Naive thymus-derived CD4-positive, alpha-beta T cell (primary cell): ENCODE measurements at regions of chr5 and their contacts with region 1.

Region 1: GRCh38 chr5:181191529-181192394 is 13.2 kb downstream of the TRIM7 start:
- DNase-seq: peak; percentile 91 to 99 (median 97)
- ATAC-seq: peak; percentile 81
- H3K4me3 ChIP-seq: peak overlapping the region; percentile 99
- H3K4me3 Mint-ChIP-seq: peak overlapping the region; percentile 94 to 99 (median 97)
- H3K27ac ChIP-seq: peak overlapping the region; percentile 86
- H3K27ac Mint-ChIP-seq: peak overlapping the region; percentile 95 to 100 (median 99)
- H3K4me1 ChIP-seq: peaks cover 0 to 5% of the 10 kb centered on the region in 2 donors
- H3K4me1 Mint-ChIP-seq: peaks cover 16 to 47% (median 26%) of the 10 kb centered on the region in 7 donors
- H3K27me3 ChIP-seq: no peaks in the 10 kb centered on the region
- H3K27me3 Mint-ChIP-seq: peaks cover 0 to 24% (median 0%) of the 10 kb centered on the region in 5 donors

Region 2: DNA sequence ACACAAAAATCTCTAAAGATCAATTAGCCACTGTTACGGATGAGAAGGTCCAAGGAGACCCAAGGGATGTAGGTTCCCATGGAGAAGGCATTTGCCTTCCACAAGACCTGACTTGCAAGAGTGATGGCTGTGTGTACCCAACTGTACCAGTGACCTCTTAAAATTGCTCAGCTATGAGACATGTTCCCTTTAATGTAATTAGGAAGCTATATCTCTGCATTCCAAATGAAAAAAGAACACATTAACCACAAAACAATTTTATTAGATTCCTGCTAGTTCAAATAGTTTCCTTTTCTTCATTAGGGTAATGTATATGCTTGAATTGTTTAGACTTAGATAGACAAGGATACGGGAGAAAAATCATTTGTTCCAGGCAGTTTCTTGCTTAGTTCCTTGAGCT is 455.2 kb before region 1 on chr5:
- CTCF ChIA-PET with region 1: no interaction called
- POLR2A ChIA-PET with region 1: no interaction called
- intact Hi-C with region 1: no loop called
- DNase-seq: no peak
- ATAC-seq: no peak
- H3K4me3 ChIP-seq: no peak overlapping the region
- H3K4me3 Mint-ChIP-seq: no peak overlapping the region
- H3K27ac ChIP-seq: no peak overlapping the region
- H3K27ac Mint-ChIP-seq: no peak overlapping the region
- H3K4me1 ChIP-seq: no peaks in the 10 kb centered on the region
- H3K4me1 Mint-ChIP-seq: peaks cover 0 to 5% (median 0%) of the 10 kb centered on the region in 7 donors
- H3K27me3 ChIP-seq: no peaks in the 10 kb centered on the region
- H3K27me3 Mint-ChIP-seq: peaks cover 17 to 35% (median 27%) of the 10 kb centered on the region in 5 donors

Region 3: GRCh38 chr5:180763270-180763669 is 428.5 kb before region 1 on chr5:
- CTCF ChIA-PET with region 1: no interaction called
- POLR2A ChIA-PET with region 1: no interaction called
- intact Hi-C with region 1: no loop called
- DNase-seq: no peak
- ATAC-seq: no peak
- H3K4me3 ChIP-seq: no peak overlapping the region
- H3K4me3 Mint-ChIP-seq: no peak overlapping the region
- H3K27ac ChIP-seq: no peak overlapping the region
- H3K27ac Mint-ChIP-seq: no peak overlapping the region
- H3K4me1 ChIP-seq: no peaks in the 10 kb centered on the region
- H3K4me1 Mint-ChIP-seq: no peaks in the 10 kb centered on the region
- H3K27me3 ChIP-seq: peaks cover 0 to 4% of the 10 kb centered on the region in 2 donors
- H3K27me3 Mint-ChIP-seq: peaks cover 24 to 51% (median 44%) of the 10 kb centered on the region in 5 donors

Region 4: GRCh38 chr5:180831139-180832048 is 360.4 kb before region 1 on chr5:
- CTCF ChIA-PET with region 1: no interaction called
- POLR2A ChIA-PET with region 1: interaction called, 3 read pairs
- intact Hi-C with region 1: loop called in 1 of 2 experiments (anchors 1 kb)
- DNase-seq: peak; percentile 60 to 85 (median 70)
- ATAC-seq: peak; percentile 76
- H3K4me3 ChIP-seq: peak overlapping the region; percentile 62
- H3K4me3 Mint-ChIP-seq: peak overlapping the region; percentile 97 to 100 (median 98)
- H3K27ac ChIP-seq: peak overlapping the region; percentile 95
- H3K27ac Mint-ChIP-seq: peak overlapping the region; percentile 96 to 100 (median 98)
- H3K4me1 ChIP-seq: peaks cover 29 to 32% of the 10 kb centered on the region in 2 donors
- H3K4me1 Mint-ChIP-seq: peaks cover 35 to 67% (median 58%) of the 10 kb centered on the region in 7 donors
- H3K27me3 ChIP-seq: no peaks in the 10 kb centered on the region
- H3K27me3 Mint-ChIP-seq: no peaks in the 10 kb centered on the region

Region 5: GRCh38 chr5:181133610-181134231 is 58.0 kb before region 1 on chr5:
- CTCF ChIA-PET with region 1: no interaction called
- POLR2A ChIA-PET with region 1: no interaction called
- intact Hi-C with region 1: no loop called
- DNase-seq: no peak
- ATAC-seq: no peak
- H3K4me3 ChIP-seq: no peak overlapping the region
- H3K4me3 Mint-ChIP-seq: no peak overlapping the region
- H3K27ac ChIP-seq: no peak overlapping the region
- H3K27ac Mint-ChIP-seq: no peak overlapping the region
- H3K4me1 ChIP-seq: no peaks in the 10 kb centered on the region
- H3K4me1 Mint-ChIP-seq: peaks cover 0 to 2% (median 0%) of the 10 kb centered on the region in 7 donors
- H3K27me3 ChIP-seq: peaks cover 0 to 8% of the 10 kb centered on the region in 2 donors
- H3K27me3 Mint-ChIP-seq: peaks cover 21 to 52% (median 47%) of the 10 kb centered on the region in 5 donors

Region 6: DNA sequence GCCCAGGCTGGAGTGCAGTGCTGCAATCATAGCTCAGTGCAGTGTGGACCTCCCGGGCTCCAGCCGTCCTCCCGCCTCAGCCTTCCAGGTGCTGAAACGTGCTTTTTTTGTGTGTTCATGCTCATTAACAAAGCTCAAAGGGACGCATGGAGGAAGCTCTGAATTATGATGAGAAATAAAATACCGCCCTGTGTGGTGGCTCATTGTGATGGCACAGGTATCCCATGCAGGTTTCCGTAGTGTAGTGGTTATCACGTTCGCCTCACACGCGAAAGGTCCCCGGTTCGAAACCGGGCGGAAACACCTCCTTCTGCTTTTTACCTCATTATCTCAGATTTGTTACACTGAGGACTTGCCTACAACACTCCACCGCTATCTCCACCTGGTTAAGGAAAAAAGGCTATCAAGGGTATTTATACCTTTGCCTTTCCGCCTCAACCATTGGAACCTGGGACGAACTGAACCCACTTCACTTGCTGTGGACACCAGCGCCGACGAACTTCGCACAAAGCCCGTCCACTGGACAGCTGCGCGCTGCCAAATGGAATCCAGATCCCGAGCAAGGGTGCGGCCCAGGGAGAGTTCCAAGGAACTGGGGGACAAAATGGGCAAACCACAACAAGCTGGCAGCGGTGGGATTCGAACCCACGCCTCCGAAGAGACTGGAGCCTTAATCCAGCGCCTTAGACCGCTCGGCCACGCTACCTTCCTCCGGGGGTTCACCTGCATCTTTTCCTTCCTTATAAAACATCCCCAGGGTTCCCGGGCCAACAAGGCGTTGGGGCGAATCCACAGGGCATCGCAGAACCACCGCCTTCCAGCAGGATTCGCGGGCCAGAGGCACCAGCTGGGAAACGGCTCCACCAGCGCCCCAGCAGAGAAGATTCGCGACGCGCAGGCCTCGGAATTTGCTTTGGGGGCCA is 18.1 kb before region 1 on chr5:
- CTCF ChIA-PET with region 1: interaction called, 3 read pairs
- POLR2A ChIA-PET with region 1: interaction called, 6 read pairs
- intact Hi-C with region 1: loop called in 1 of 2 experiments (anchors 2 kb)
- DNase-seq: peak; percentile 19 to 81 (median 69)
- ATAC-seq: peak; percentile 75
- H3K4me3 ChIP-seq: peak overlapping the region; percentile 54
- H3K4me3 Mint-ChIP-seq: peak overlapping the region; percentile 64 to 98 (median 91)
- H3K27ac ChIP-seq: no peak overlapping the region
- H3K27ac Mint-ChIP-seq: peak overlapping the region; percentile 65 to 98 (median 85)
- H3K4me1 ChIP-seq: peaks cover 10 to 23% of the 10 kb centered on the region in 2 donors
- H3K4me1 Mint-ChIP-seq: peaks cover 20 to 45% (median 36%) of the 10 kb centered on the region in 7 donors
- H3K27me3 ChIP-seq: peaks cover 6 to 19% of the 10 kb centered on the region in 2 donors
- H3K27me3 Mint-ChIP-seq: peaks cover 32 to 69% (median 47%) of the 10 kb centered on the region in 5 donors

Region 7: GRCh38 chr5:181217111-181217802 is 25.5 kb after region 1 on chr5:
- CTCF ChIA-PET with region 1: interaction called, 23 read pairs
- POLR2A ChIA-PET with region 1: interaction called, 158 read pairs
- intact Hi-C with region 1: loop called (anchors 1 kb)
- DNase-seq: peak; percentile 35 to 73 (median 63)
- ATAC-seq: peak; percentile 34
- H3K4me3 ChIP-seq: peak overlapping the region; percentile 85
- H3K4me3 Mint-ChIP-seq: peak overlapping the region; percentile 91 to 100 (median 94)
- H3K27ac ChIP-seq: peak overlapping the region; percentile 74
- H3K27ac Mint-ChIP-seq: peak overlapping the region; percentile 89 to 100 (median 96)
- H3K4me1 ChIP-seq: peaks cover 17 to 29% of the 10 kb centered on the region in 2 donors
- H3K4me1 Mint-ChIP-seq: peaks cover 15 to 62% (median 49%) of the 10 kb centered on the region in 7 donors
- H3K27me3 ChIP-seq: no peaks in the 10 kb centered on the region
- H3K27me3 Mint-ChIP-seq: peaks cover 0 to 12% (median 0%) of the 10 kb centered on the region in 5 donors

Region 8: GRCh38 chr5:181260387-181261319 is 68.9 kb after region 1 on chr5 and contains the start of gene TRIM52:
- CTCF ChIA-PET with region 1: interaction called, 7 read pairs
- POLR2A ChIA-PET with region 1: interaction called, 107 read pairs
- intact Hi-C with region 1: loop called (anchors 1 kb)
- DNase-seq: peak; percentile 79 to 91 (median 90)
- ATAC-seq: peak; percentile 93
- H3K4me3 ChIP-seq: peak within 1 kb of the TSS; percentile 93
- H3K4me3 Mint-ChIP-seq: peak within 1 kb of the TSS; percentile 94 to 100 (median 98)
- H3K27ac ChIP-seq: peak within 1 kb of the TSS; percentile 97
- H3K27ac Mint-ChIP-seq: peak within 1 kb of the TSS; percentile 95 to 99 (median 98)
- H3K4me1 ChIP-seq: peaks cover 31 to 39% of the 10 kb centered on the region in 2 donors
- H3K4me1 Mint-ChIP-seq: peaks cover 34 to 60% (median 56%) of the 10 kb centered on the region in 7 donors
- H3K27me3 ChIP-seq: no peaks in the 10 kb centered on the region
- H3K27me3 Mint-ChIP-seq: no peaks in the 10 kb centered on the region
- total RNA-seq, gene TRIM52: 31.4 to 71.6 (median 35.7) TPM